MCF 10A (cell line): ENCODE measurements at regions of chr7 and their contacts with region 1.

Region 1: GRCh38 chr7:8261711-8262695 is at the start of gene ICA1:
- DNase-seq: peak; percentile 66
- H3K4me3 Mint-ChIP-seq: peak within 1 kb of the TSS; percentile 82
- H3K27ac Mint-ChIP-seq: no peak within 1 kb of the TSS
- H3K4me1 Mint-ChIP-seq: no peaks in the 10 kb centered on the region
- H3K27me3 Mint-ChIP-seq: no peaks in the 10 kb centered on the region
- CTCF ChIP-seq: no peak
- total RNA-seq, gene ICA1: 26.3 and 31.5 TPM in 2 replicates

Region 2: DNA sequence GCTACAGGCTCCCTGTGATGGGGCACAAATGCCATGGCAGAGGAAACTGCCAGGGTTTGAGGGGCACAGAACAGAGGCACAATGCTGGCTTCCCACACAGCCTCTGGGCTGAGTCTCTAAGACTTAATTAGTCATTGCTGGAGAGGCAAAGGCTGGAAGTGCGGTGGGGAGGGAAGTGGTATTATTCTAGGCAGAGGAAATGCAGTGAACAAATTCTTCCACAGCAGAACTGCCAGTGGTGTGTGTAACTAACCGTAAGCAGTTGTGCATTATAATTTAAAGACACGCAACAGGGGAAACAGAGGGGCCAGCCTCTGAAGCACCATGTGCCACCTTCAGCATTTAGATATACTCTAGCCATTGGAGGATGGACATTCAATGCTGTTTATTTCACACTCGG is 12.9 kb before region 1 on chr7:
- CTCF ChIA-PET with region 1: no interaction called
- POLR2A ChIA-PET with region 1: interaction called, 13 read pairs
- intact Hi-C with region 1: no loop called
- DNase-seq: no peak
- H3K4me3 Mint-ChIP-seq: no peak overlapping the region
- H3K27ac Mint-ChIP-seq: no peak overlapping the region
- H3K4me1 Mint-ChIP-seq: no peaks in the 10 kb centered on the region
- H3K27me3 Mint-ChIP-seq: no peaks in the 10 kb centered on the region
- CTCF ChIP-seq: no peak

Region 3: DNA sequence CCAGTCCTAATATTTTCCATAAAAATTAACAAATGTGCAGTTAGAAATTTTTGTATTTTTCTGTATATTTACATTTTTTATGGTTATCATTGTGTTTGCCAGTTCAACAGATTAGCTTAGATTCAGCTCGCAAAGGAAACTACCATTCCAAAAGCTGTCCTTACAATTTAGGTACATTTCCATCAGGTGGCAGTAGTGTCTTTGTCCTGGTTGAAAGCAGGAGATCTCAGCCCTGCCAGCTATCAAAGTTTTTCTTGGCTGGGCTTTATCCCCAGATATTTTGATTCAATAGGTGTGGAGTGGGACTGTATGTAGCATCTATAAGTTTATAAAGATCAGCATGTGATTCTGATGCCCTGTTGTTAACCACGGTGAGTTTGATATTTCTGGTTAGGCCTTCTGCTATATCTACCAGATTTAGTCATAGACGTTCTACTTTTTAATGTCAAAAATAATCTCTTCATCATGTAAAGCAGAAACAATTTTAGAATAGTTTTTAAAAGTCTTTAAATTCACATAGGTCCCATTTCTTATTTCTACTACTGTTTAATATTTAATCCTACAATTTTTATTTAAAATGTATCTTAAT is 15.5 kb after region 1 on chr7:
- CTCF ChIA-PET with region 1: interaction called, 6 read pairs
- POLR2A ChIA-PET with region 1: interaction called, 11 read pairs
- intact Hi-C with region 1: no loop called
- DNase-seq: peak; percentile 51
- H3K4me3 Mint-ChIP-seq: no peak overlapping the region
- H3K27ac Mint-ChIP-seq: no peak overlapping the region
- H3K4me1 Mint-ChIP-seq: peaks cover 14% of the 10 kb centered on the region
- H3K27me3 Mint-ChIP-seq: no peaks in the 10 kb centered on the region
- CTCF ChIP-seq: peak; percentile 36

Region 4: DNA sequence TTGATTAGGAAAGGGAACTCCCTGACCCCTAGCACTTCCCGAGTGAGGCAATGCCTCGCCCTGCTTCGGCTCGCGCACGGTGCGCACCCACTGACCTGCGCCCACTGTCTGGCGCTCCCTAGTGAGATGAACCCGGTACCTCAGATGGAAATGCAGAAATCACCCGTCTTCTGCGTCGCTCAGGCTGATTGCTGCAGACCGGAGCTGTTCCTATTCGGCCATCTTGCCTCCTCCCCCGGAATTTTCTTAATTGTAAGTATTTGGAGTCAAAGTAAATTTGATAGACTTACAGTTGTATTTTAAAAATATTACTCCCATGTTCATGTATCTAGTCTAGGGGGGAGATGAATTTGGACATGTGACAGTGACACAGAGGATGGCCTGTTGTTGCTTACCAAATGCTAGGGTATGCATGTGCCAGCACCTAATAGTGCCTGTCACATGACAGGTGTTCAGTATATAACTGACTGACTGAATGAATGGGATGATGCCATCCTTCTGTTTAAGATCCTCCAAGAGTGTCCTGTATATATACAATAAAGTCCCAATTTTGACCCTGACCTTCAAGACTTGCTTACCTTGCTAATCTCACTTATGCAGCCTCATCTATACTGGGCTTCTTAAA is 42.0 kb after region 1 on chr7:
- CTCF ChIA-PET with region 1: no interaction called
- POLR2A ChIA-PET with region 1: no interaction called
- intact Hi-C with region 1: no loop called
- DNase-seq: no peak
- H3K4me3 Mint-ChIP-seq: no peak overlapping the region
- H3K27ac Mint-ChIP-seq: no peak overlapping the region
- H3K4me1 Mint-ChIP-seq: no peaks in the 10 kb centered on the region
- H3K27me3 Mint-ChIP-seq: peaks cover 8% of the 10 kb centered on the region
- CTCF ChIP-seq: no peak